ENCODE measurements at regions of chr7 and their contacts with region 1.

Region 1: GRCh38 chr7:54788664-54789063 is 29.7 kb upstream of the SEC61G start:
- DNase-seq: peak; percentile 95
- ATAC-seq: peak; percentile 95
- H3K4me3 ChIP-seq: 0 out of 2 replicates have a peak overlapping the region, but pooled peaks have one; percentile 20
- H3K27ac ChIP-seq: peak overlapping the region; percentile 60
- H3K4me1 ChIP-seq: peaks cover 22% of the 10 kb centered on the region
- H3K27me3 ChIP-seq: no peaks in the 10 kb centered on the region
- CTCF ChIP-seq: peak; percentile 87

Region 2: GRCh38 chr7:54622696-54623309 is 165.9 kb before region 1 on chr7:
- CTCF ChIA-PET with region 1: no interaction called
- POLR2A ChIA-PET with region 1: no interaction called
- intact Hi-C with region 1: no loop called
- DNase-seq: no peak
- ATAC-seq: no peak
- H3K4me3 ChIP-seq: no peak overlapping the region
- H3K27ac ChIP-seq: no peak overlapping the region
- H3K4me1 ChIP-seq: no peaks in the 10 kb centered on the region
- H3K27me3 ChIP-seq: peaks cover 4% of the 10 kb centered on the region; the same call in 1 of the 2 replicates
- CTCF ChIP-seq: no peak

Region 3: GRCh38 chr7:54825368-54825767 is 36.7 kb after region 1 on chr7:
- CTCF ChIA-PET with region 1: no interaction called
- POLR2A ChIA-PET with region 1: no interaction called
- intact Hi-C with region 1: loop called (anchors 1 kb)
- DNase-seq: no peak
- ATAC-seq: peak; percentile 54
- H3K4me3 ChIP-seq: peak overlapping the region; percentile 45; the same call in 1 of the 2 replicates
- H3K27ac ChIP-seq: peak overlapping the region; percentile 83
- H3K4me1 ChIP-seq: peaks cover 41% of the 10 kb centered on the region
- H3K27me3 ChIP-seq: no peaks in the 10 kb centered on the region
- CTCF ChIP-seq: no peak; the same call in 1 of the 2 replicates

Region 4: DNA sequence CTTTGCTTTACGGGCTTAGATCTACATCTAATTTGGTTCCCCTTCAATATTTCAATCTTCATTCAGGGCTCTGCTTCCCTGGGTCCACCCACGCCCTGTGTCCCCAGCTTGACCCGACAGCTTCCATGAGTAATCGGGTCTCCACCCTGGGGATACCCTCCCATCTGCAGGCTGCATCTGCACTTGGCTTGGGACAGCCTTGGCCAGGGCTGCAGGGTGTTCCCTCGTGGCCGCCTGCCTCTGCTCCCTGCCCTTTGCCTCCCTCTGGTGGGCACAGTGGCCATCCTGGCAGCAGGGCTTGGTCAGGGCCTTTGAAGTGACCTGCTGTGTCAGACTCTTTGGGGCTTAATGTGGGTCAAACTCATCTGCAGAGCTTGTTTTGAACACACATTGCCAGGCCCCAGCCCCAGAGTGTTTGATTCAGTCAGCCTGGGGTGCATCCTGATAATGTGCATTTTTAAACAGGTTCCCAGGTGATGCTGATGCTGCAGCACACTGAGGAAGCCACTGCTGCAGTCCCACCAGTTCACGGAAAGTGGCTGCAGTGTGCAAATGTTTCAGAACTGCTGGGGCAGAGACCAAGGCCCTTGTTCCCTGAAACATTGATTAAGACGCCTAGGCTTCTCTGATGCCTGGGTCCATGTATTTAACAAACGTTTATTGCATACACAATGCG is 51.0 kb after region 1 on chr7:
- CTCF ChIA-PET with region 1: interaction called, 31 read pairs
- POLR2A ChIA-PET with region 1: no interaction called
- intact Hi-C with region 1: loop called (anchors 1 kb)
- DNase-seq: peak; percentile 78
- ATAC-seq: peak; percentile 74
- H3K4me3 ChIP-seq: no peak overlapping the region
- H3K27ac ChIP-seq: peak overlapping the region; percentile 96
- H3K4me1 ChIP-seq: peaks cover 69% of the 10 kb centered on the region
- H3K27me3 ChIP-seq: no peaks in the 10 kb centered on the region
- CTCF ChIP-seq: peak; percentile 90

Region 5: DNA sequence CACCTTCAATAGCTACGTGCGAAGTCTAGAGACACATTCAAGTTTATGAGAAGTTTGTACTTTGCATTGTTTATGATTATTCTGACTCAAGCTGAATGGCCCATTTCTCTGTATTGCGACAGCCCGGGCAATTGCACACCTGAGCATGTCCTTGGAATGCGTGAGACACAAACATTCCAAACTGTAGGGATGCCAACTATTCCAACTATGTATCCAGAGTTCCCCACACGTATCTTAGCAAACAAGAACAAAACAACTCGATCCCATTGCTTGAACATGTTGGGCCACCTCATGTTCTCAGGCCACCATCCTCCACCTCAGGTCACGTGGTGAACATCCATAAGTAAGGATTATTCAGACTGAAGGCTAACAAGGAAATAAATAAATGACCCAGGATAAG is 178.7 kb after region 1 on chr7:
- CTCF ChIA-PET with region 1: no interaction called
- POLR2A ChIA-PET with region 1: no interaction called
- intact Hi-C with region 1: loop called (anchors 10 kb)
- DNase-seq: peak; percentile 98
- ATAC-seq: peak; percentile 72
- H3K4me3 ChIP-seq: no peak overlapping the region
- H3K27ac ChIP-seq: peak overlapping the region; percentile 84
- H3K4me1 ChIP-seq: peaks cover 55% of the 10 kb centered on the region
- H3K27me3 ChIP-seq: no peaks in the 10 kb centered on the region
- CTCF ChIP-seq: no peak

Region 6: GRCh38 chr7:55026866-55027490 is 238.3 kb after region 1 on chr7:
- CTCF ChIA-PET with region 1: no interaction called
- POLR2A ChIA-PET with region 1: no interaction called
- intact Hi-C with region 1: loop called (anchors 5 kb)
- DNase-seq: no peak
- ATAC-seq: peak; percentile 25; the same call in 1 of the 2 replicates
- H3K4me3 ChIP-seq: no peak overlapping the region
- H3K27ac ChIP-seq: 0 out of 2 replicates have a peak overlapping the region, but pooled peaks have one; percentile 2
- H3K4me1 ChIP-seq: peaks cover 53% of the 10 kb centered on the region
- H3K27me3 ChIP-seq: no peaks in the 10 kb centered on the region
- CTCF ChIP-seq: no peak

Region 7: GRCh38 chr7:55255496-55256435 is 467.1 kb after region 1 on chr7:
- CTCF ChIA-PET with region 1: interaction called, 19 read pairs
- POLR2A ChIA-PET with region 1: no interaction called
- intact Hi-C with region 1: loop called (anchors 1 kb)
- DNase-seq: peak; percentile 85
- ATAC-seq: peak; percentile 84
- H3K4me3 ChIP-seq: peak overlapping the region; percentile 72
- H3K27ac ChIP-seq: peak overlapping the region; percentile 47
- H3K4me1 ChIP-seq: peaks cover 9% of the 10 kb centered on the region; the same call in 1 of the 2 replicates
- H3K27me3 ChIP-seq: no peaks in the 10 kb centered on the region
- CTCF ChIP-seq: peak; percentile 90

Measured in PC-3 (cell line).